Mammary epithelial cell (primary cell): ENCODE measurements at regions of chr5 and their contacts with region 1.

Region 1: GRCh38 chr5:78648359-78649210 is at the start of gene LHFPL2:
- DNase-seq: peak; percentile 64
- H3K4me3 ChIP-seq: peak within 1 kb of the TSS; percentile 84 to 95 (median 93)
- H3K27ac ChIP-seq: peak within 1 kb of the TSS; percentile 75
- H3K4me1 ChIP-seq: peaks cover 31% of the 10 kb centered on the region
- H3K27me3 ChIP-seq: no peaks in the 10 kb centered on the region
- CTCF ChIP-seq: no peak
- total RNA-seq, gene LHFPL2: 52.5 to 53.5 TPM

Region 2: GRCh38 chr5:78377056-78377717 is 271.4 kb before region 1 on chr5:
- CTCF ChIA-PET with region 1: no interaction called
- dilution Hi-C with region 1: no loop called
- in situ Hi-C with region 1: no loop called
- intact Hi-C with region 1: no loop called
- DNase-seq: peak; percentile 46
- H3K4me3 ChIP-seq: no peak overlapping the region
- H3K27ac ChIP-seq: no peak overlapping the region
- H3K4me1 ChIP-seq: peaks cover 12% of the 10 kb centered on the region
- H3K27me3 ChIP-seq: no peaks in the 10 kb centered on the region
- CTCF ChIP-seq: no peak

Region 3: DNA sequence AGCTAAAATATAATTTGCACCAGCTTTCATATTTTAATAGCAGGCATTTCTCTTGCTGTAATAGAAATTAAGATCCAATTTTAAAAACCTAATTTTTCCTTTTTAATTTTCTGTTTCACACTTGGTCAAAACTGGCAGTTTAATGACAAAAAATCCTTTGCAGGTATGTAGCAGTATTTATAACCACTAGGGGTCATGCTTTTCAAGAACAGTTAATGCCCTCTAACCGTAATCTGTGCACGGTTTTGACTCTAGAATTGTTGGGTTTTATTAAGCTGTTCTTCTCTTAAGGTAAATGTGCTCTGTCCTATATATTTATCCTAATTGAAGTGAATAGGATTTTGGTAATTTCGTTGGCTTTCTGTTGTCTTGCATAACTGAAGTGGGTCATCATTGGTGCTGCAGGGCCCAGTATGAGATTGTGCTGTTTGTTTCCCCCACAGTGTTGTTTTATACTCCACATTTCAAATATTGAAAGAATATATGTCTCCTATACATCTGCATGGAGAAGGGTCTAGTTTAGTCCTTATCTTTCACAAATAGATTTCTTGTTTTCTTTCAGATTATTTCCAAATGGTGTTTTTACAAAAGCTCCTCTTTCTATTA is 180.7 kb before region 1 on chr5:
- CTCF ChIA-PET with region 1: no interaction called
- dilution Hi-C with region 1: no loop called
- in situ Hi-C with region 1: no loop called
- intact Hi-C with region 1: loop called (anchors 5 kb)
- DNase-seq: peak; percentile 20
- H3K4me3 ChIP-seq: no peak overlapping the region
- H3K27ac ChIP-seq: no peak overlapping the region
- H3K4me1 ChIP-seq: no peaks in the 10 kb centered on the region
- H3K27me3 ChIP-seq: no peaks in the 10 kb centered on the region
- CTCF ChIP-seq: peak; percentile 72 to 76

Region 4: GRCh38 chr5:78586251-78586650 is 62.3 kb before region 1 on chr5:
- CTCF ChIA-PET with region 1: no interaction called
- dilution Hi-C with region 1: no loop called
- in situ Hi-C with region 1: no loop called
- intact Hi-C with region 1: loop called (anchors 5 kb)
- DNase-seq: peak; percentile 99
- H3K4me3 ChIP-seq: no peak overlapping the region
- H3K27ac ChIP-seq: peak overlapping the region; percentile 71
- H3K4me1 ChIP-seq: peaks cover 27% of the 10 kb centered on the region
- H3K27me3 ChIP-seq: no peaks in the 10 kb centered on the region
- CTCF ChIP-seq: no peak

Region 5: DNA sequence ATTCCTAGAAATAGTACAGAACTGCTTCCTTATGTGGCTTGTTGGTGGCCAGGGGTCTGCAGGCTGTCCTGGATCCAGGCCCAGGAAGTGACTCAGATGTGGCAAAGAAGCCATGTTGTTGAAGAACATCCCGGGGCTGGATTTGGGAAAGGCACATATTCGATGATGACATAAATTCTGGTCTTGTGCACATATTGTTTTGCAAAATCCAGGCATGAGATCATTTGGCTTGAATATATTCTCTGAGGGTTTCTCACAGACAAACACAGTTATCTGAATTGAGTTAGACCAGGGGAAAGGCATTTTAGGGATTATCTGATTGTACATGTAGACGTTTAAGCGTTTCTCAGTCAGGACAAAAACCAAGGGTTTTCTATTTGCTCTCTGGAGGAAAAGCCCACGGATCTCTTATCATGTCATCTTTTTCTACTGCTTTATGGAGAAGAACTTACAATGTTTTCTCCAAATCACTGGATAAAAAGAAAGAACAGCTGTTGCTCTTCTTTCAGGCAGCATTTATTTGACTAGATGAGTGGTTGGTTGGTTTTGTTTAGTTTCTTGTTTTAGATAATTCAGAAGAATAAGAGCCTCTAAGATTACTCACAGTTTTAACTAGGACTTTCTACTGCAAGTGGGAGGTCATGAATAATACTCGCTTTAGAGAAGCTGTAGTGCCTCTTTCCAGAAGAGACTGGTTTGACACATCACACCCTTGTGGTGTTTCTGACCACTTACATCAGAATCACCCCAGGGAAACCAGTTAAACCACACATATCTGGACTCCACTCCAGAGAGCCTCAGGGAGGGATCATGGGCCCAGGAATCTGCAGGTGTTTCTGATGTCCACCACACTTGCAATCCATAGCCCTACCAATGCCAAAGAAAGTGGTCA is 29.4 kb after region 1 on chr5:
- CTCF ChIA-PET with region 1: no interaction called
- dilution Hi-C with region 1: no loop called
- in situ Hi-C with region 1: no loop called
- intact Hi-C with region 1: loop called (anchors 2 kb)
- DNase-seq: peak; percentile 96
- H3K4me3 ChIP-seq: no peak overlapping the region
- H3K27ac ChIP-seq: peak overlapping the region; percentile 77
- H3K4me1 ChIP-seq: peaks cover 20% of the 10 kb centered on the region
- H3K27me3 ChIP-seq: no peaks in the 10 kb centered on the region
- CTCF ChIP-seq: no peak

Region 6: GRCh38 chr5:78706825-78707224 is 58.2 kb after region 1 on chr5:
- CTCF ChIA-PET with region 1: interaction called, 10 read pairs
- dilution Hi-C with region 1: no loop called
- in situ Hi-C with region 1: no loop called
- intact Hi-C with region 1: no loop called
- DNase-seq: no peak
- H3K4me3 ChIP-seq: no peak overlapping the region
- H3K27ac ChIP-seq: no peak overlapping the region
- H3K4me1 ChIP-seq: peaks cover 8% of the 10 kb centered on the region
- H3K27me3 ChIP-seq: no peaks in the 10 kb centered on the region
- CTCF ChIP-seq: no peak

Region 7: GRCh38 chr5:78899922-78900362 is 251.4 kb after region 1 on chr5:
- CTCF ChIA-PET with region 1: interaction called, 4 read pairs
- dilution Hi-C with region 1: no loop called
- in situ Hi-C with region 1: loop called in 1 of 2 experiments (anchors 25 kb)
- intact Hi-C with region 1: no loop called
- DNase-seq: peak; percentile 44
- H3K4me3 ChIP-seq: no peak overlapping the region
- H3K27ac ChIP-seq: no peak overlapping the region
- H3K4me1 ChIP-seq: no peaks in the 10 kb centered on the region
- H3K27me3 ChIP-seq: no peaks in the 10 kb centered on the region
- CTCF ChIP-seq: peak; percentile 79 to 83